Ascending aorta (tissue), 2 donors: ENCODE measurements at regions of chr1 and their contacts with region 1.

Region 1: DNA sequence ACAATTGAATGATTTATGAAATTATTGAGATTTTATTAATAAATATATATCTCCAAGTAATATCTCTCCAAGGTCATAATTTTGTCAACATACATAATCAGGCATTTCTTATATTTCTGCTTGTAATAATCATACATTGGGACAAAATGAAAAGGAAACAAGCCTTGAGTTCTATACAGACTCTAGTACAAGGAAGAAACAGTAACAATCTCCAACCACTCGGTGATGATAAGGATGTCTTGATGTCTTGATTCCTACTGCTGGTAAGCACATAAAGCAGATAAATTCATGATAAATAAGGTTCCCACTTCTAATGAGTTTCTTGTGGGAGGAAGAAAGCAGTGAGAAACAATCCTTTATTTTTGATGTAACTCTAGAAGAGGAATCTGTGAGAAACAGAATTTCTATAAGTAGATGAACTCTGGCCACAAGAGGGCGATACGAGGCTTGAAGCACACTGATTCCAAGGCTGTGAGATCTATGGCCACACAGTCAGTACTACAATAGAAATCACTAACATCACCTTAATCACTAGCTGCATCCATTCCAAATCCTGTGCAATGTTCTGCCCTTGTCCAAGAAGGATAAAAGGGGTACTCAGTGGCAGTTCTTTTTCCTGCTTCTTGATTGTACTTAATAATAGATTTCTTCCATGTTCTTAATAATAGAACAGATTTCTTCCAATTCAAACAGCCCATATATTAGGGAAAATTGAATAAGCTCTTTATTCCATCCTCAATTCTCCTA is 41.4 kb upstream of the LRRC8B start:
- DNase-seq: peak in 1 of 2 donors; percentile 82
- H3K4me3 ChIP-seq: no peak overlapping the region
- H3K27ac ChIP-seq: no peak overlapping the region
- H3K4me1 ChIP-seq: no peaks in the 10 kb centered on the region
- H3K27me3 ChIP-seq: no peaks in the 10 kb centered on the region
- CTCF ChIP-seq: peak; percentile 43 to 68 (median 63)

Region 2: DNA sequence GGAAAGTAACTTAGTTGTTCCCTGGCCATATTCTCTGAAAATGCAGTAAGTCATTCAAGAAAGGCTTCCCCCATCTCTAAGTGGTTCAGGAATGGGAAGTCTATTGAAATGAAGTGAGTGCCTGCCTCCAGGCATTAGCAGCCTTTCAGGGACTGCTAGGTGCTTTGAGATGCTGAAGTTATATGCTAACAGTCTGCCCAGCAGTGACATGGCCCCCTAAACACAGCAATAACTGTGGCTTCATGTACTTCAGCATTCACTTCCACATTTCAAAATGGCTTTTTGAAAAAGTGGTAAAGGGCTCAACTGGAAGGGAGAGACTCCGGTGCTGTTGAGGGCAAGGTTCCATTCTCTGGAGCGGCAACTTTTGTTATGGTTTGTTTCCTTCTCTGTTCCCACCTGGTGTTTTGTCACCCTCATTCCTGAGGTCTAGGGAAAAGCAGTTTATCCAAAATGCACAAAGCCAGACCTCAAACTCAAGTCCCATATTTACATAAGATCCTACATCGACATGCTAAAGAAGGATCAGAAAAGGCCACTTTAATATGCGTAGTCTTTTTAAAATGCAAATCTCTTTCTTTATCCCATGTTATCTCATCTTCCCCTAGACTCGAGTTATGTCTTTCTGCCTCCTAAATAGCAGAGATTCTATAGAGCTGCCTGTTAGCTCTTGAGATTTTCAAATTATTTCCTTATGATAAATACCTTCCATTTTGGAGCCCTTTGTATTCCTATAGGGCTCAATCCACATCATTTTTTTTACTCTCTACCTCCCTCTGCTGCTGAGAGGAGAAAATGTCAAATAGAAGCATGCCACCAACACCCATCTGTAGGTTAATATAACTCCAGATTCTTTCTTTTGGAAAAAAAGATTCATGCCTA is 115.5 kb after region 1 on chr1:
- intact Hi-C with region 1: loop called (anchors 1 kb)
- DNase-seq: no peak
- H3K4me3 ChIP-seq: no peak overlapping the region
- H3K27ac ChIP-seq: no peak overlapping the region
- H3K4me1 ChIP-seq: no peaks in the 10 kb centered on the region
- H3K27me3 ChIP-seq: no peaks in the 10 kb centered on the region
- CTCF ChIP-seq: peak; percentile 42 to 62 (median 43)

Region 3: GRCh38 chr1:89804642-89805237 is 321.6 kb after region 1 on chr1:
- intact Hi-C with region 1: no loop called
- DNase-seq: peak; percentile 33 to 92
- H3K4me3 ChIP-seq: no peak overlapping the region
- H3K27ac ChIP-seq: no peak overlapping the region
- H3K4me1 ChIP-seq: no peaks in the 10 kb centered on the region
- H3K27me3 ChIP-seq: no peaks in the 10 kb centered on the region
- CTCF ChIP-seq: peak; percentile 65 to 83 (median 82)